Activated CD4-positive, alpha-beta T cell treated with anti-CD3 and anti-CD28 coated beads, Interleukin-2, amount 10 ng/mL, durations not matched to agents 24 days and 14 days (primary cell): ENCODE measurements at regions of chr12 and their contacts with region 1.

Region 1: GRCh38 chr12:110619534-110619953 is 5.6 kb downstream of the TCTN1 start:
- DNase-seq: peak; percentile 68
- H3K4me3 Mint-ChIP-seq: peak overlapping the region; percentile 51
- H3K27ac Mint-ChIP-seq: peak overlapping the region; percentile 80
- H3K4me1 Mint-ChIP-seq: peaks cover 8% of the 10 kb centered on the region
- H3K27me3 Mint-ChIP-seq: no peaks in the 10 kb centered on the region

Region 2: GRCh38 chr12:110566993-110567392 is 52.6 kb before region 1 on chr12:
- intact Hi-C with region 1: no loop called
- DNase-seq: no peak
- H3K4me3 Mint-ChIP-seq: no peak overlapping the region
- H3K27ac Mint-ChIP-seq: no peak overlapping the region
- H3K4me1 Mint-ChIP-seq: peaks cover 49% of the 10 kb centered on the region
- H3K27me3 Mint-ChIP-seq: no peaks in the 10 kb centered on the region

Region 3: DNA sequence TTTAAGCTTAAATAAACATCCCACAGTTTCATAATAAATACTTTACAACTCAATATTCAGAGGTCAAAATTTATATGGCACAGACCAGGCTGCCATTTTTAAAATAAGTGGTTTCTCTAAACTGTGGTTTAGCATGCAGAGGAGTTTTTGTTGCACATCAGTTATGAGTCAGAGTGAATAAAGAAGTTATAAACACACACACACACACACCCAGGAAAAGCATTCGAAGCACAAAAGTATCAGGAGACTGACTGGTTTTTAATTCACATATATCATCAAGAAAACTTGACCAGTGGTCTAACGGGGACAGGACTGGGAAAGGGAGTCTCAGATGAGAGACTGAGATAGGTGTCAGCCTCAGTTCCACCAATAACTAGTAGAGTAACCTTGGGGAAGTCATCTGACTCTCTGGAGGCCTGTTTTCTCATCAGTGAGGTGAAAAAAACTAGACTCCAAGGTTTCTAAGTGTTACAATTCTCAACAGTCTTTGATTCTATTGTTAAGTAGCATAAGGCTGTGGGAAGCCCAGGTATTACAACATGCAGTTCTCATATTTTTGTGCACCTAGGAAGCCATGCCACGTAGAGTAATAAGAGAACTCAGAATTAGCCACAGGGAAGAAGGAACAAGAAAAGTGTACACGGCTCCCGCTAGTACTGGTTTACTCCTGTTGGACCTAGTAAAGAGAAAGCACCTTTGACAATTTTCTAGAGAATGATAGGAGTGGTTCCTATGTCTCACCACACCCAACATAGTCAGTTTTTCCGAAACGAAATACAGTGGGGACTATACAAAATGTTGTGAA is 41.6 kb before region 1 on chr12:
- intact Hi-C with region 1: loop called (anchors 1 kb)
- DNase-seq: peak; percentile 87
- H3K4me3 Mint-ChIP-seq: peak overlapping the region; percentile 98
- H3K27ac Mint-ChIP-seq: peak overlapping the region; percentile 97
- H3K4me1 Mint-ChIP-seq: peaks cover 59% of the 10 kb centered on the region
- H3K27me3 Mint-ChIP-seq: no peaks in the 10 kb centered on the region

Region 4: DNA sequence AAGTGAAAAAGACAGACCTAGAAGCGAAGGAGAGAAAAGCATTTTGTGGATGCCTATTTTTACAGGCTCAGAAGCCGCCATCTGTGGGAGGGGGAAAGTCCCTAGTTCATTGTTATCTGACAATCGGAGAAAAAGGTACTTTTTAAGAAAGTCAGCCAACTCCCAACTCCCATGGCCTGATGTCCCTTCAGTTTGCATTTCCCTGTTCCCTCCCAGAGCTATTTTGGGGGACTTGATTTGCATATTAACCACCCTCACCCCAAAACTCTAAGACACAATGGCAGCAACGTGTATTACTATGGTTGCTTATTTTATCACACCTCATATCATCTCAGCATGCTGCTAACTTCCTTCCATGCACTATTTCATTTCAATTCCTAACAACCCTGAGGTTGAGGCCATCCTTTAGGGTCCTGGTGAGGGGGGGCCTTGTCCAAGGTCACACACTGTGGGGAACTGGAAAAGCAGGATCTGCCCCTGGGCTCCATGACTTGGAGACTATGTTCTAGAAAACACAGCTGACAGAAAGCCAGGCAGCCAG is 50.7 kb after region 1 on chr12:
- intact Hi-C with region 1: loop called (anchors 2 kb)
- DNase-seq: peak; percentile 84
- H3K4me3 Mint-ChIP-seq: peak overlapping the region; percentile 65
- H3K27ac Mint-ChIP-seq: peak overlapping the region; percentile 90
- H3K4me1 Mint-ChIP-seq: peaks cover 39% of the 10 kb centered on the region
- H3K27me3 Mint-ChIP-seq: no peaks in the 10 kb centered on the region

Region 5: DNA sequence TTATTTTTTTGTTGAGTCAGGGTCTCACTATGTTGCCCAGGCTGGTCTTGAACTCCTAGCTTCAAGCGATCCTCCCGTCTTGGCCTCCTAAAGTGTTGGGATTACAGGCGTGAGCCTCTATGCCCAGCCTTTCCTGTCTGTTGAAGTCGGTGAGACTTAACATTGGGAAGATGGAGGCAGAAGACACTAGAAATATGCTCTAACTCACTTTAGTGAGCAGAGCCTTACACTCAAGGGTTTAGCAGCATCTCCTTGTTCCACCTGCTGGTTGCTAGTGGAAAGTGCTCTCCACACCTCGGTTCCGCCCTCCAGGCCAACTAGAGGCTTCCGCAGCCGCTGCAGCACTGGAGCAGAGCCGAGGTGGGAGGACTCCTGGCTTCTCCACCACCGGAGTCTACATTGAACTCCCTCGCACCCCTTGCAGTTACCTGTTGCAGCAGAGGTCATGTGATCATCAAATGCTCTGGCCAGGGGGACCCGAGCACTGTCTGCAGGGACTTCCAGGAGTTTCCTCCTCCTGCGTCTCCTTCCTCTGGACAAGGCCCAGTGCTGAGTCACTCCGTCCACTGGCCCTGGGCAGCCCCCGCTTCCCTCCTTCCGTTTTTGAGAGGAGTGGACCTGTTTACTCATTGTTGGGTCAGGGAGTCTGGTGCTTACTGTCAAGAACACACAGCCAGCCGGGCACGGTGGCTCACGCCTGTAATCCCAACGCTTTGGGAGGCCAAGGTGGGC is 78.8 kb after region 1 on chr12:
- intact Hi-C with region 1: loop called (anchors 1 kb)
- DNase-seq: peak; percentile 95
- H3K4me3 Mint-ChIP-seq: no peak overlapping the region
- H3K27ac Mint-ChIP-seq: peak overlapping the region; percentile 88
- H3K4me1 Mint-ChIP-seq: peaks cover 12% of the 10 kb centered on the region
- H3K27me3 Mint-ChIP-seq: no peaks in the 10 kb centered on the region

Region 6: DNA sequence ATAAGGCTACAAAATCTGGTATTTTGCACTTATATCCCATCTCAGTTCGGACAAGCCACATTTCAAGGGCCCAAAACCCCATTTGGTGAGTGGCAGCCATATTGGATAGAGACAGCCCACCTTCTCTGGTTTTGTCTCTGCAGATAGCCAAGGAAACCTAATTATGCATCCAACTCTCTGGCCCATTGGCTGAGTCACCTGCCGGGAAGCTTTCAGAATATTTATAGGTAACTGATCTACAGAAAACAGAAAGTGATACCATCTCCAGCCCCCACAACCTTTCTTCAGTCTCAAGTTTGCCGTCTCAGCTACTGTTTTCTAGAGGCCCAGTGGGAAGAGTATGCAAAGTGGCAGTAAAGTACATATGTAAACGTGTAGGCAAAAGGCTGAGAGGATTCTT is 156.9 kb after region 1 on chr12:
- intact Hi-C with region 1: loop called (anchors 1 kb)
- DNase-seq: peak; percentile 85
- H3K4me3 Mint-ChIP-seq: peak overlapping the region; percentile 72
- H3K27ac Mint-ChIP-seq: peak overlapping the region; percentile 97
- H3K4me1 Mint-ChIP-seq: peaks cover 60% of the 10 kb centered on the region
- H3K27me3 Mint-ChIP-seq: no peaks in the 10 kb centered on the region